Breast epithelium (tissue), 4 donors: ENCODE measurements at regions of chr6 and their contacts with region 1.

Region 1: DNA sequence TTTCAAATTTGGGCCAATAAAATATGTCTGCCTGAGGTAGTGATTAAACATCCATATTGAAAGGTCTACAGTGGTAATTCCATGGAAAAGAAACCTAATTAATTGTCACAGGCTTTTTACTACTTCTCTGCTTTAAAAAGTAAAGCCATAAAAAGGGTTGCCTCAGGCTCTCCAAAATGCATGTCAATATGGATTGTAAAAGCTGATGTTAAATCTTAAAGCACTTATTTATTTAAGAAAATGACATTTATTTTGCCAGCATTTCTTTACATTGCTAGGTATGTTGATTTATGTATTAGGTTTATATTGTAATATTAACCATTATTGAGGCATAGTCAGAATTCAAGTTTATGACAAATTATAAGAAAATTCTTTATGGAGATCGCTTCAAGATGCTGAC is 133.2 kb downstream of the OPN5 start:
- DNase-seq: no peak
- H3K4me3 ChIP-seq: no peak overlapping the region
- H3K27ac ChIP-seq: no peak overlapping the region
- H3K4me1 ChIP-seq: no peaks in the 10 kb centered on the region
- H3K27me3 ChIP-seq: no peaks in the 10 kb centered on the region
- CTCF ChIP-seq: no peak
- POLR2A ChIP-seq: no peak

Region 2: DNA sequence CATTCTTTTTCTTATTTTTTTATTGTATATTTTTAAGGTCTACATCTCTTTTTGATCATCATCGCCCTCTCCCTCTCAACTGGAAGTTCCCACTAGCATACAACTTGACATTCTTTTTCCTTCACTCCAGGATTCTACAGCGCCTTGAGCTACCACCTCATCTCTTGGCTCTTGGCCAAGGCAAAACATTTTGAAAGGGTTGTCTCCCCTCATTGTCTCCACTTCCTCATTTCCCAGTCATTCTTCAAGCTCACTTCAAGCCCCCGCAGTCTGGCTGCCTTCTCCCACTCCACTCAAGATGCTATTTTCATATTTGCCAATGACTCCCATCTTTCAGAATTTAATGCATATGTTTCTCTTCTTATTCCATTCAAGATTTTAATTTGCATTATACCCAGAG is 70.1 kb before region 1 on chr6:
- intact Hi-C with region 1: loop called (anchors 2 kb)
- DNase-seq: no peak
- H3K4me3 ChIP-seq: no peak overlapping the region
- H3K27ac ChIP-seq: no peak overlapping the region
- H3K4me1 ChIP-seq: no peaks in the 10 kb centered on the region
- H3K27me3 ChIP-seq: no peaks in the 10 kb centered on the region
- CTCF ChIP-seq: no peak
- POLR2A ChIP-seq: no peak